T-cell (primary cell): ENCODE measurements at regions of chr6 and their contacts with region 1.

Region 1: DNA sequence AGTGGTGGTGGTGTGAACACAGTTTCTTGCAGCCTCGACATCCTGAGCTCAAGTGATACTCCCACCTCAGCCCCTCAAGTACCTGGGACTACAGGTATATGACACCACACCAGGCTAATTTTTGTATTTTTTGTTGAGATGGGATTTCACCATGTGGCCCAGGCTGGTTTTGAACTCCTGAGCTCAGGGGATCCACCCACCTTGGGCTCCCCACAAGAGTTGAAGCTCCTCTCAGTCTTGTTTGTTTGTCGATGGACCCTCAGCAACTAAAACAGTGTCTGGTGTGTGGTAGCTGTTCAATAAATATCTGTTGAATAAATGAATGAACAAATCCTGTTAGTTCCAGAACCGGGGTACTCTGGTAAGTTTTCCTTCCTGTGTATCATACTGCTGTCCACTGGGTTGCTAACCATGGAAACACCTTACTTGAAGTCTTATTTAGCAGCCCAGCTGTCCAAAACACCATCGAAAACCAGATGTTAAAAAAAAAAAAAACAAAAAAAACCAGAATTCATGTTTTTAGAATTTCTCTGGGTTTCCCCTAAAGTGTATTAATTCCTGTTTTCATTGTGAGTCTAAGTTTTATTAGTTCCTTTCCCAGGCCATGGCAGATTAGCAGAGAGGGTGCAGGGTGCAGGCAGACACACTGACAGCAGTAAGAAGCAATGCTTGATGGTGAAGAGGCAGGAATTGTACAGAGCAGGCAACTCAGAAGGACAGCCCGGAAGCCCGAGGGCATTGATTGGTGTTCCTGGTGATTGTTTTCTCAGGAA is 7.8 kb upstream of the EZR start:
- DNase-seq: no peak
- ATAC-seq: no peak
- H3K4me3 ChIP-seq: no peak overlapping the region
- H3K4me3 Mint-ChIP-seq: no peak overlapping the region
- H3K27ac ChIP-seq: no peak overlapping the region
- H3K27ac Mint-ChIP-seq: no peak overlapping the region
- H3K4me1 ChIP-seq: peaks cover 0 to 2% of the 10 kb centered on the region in 2 experiments
- H3K4me1 Mint-ChIP-seq: peaks cover 0 to 17% (median 4%) of the 10 kb centered on the region in 3 donors
- H3K27me3 ChIP-seq: no peaks in the 10 kb centered on the region
- H3K27me3 Mint-ChIP-seq: no peaks in the 10 kb centered on the region

Region 2: GRCh38 chr6:158725722-158726121 is 101.3 kb before region 1 on chr6:
- CTCF ChIA-PET with region 1: no interaction called
- POLR2A ChIA-PET with region 1: no interaction called
- DNase-seq: no peak
- ATAC-seq: no peak
- H3K4me3 ChIP-seq: no peak overlapping the region
- H3K4me3 Mint-ChIP-seq: no peak overlapping the region
- H3K27ac ChIP-seq: no peak overlapping the region
- H3K27ac Mint-ChIP-seq: no peak overlapping the region
- H3K4me1 ChIP-seq: peaks cover 0 to 14% of the 10 kb centered on the region in 2 experiments
- H3K4me1 Mint-ChIP-seq: peaks cover 6 to 15% (median 8%) of the 10 kb centered on the region in 3 donors
- H3K27me3 ChIP-seq: no peaks in the 10 kb centered on the region
- H3K27me3 Mint-ChIP-seq: no peaks in the 10 kb centered on the region

Region 3: DNA sequence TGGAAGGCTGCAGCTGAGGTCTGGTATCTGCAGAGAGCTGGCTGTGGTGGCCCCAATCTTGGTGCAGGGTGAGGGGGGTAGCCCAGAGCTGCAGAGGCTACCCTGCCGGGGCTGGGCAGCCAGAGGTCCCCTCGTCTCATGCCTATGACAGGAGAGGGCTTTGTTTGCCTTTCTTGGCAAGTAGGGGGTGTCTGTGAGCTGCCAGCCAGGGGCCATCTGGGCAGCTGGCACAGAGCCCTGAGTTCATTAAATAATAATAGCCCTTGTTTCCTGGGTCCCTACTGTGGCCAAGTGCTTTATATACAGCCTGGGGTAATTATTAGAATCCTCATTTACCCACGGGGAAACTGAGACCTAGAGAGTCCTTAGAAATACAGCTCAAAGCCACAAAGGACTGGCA is 74.4 kb before region 1 on chr6:
- CTCF ChIA-PET with region 1: no interaction called
- POLR2A ChIA-PET with region 1: interaction called in 1 of 2 experiments, 12 read pairs
- DNase-seq: no peak
- ATAC-seq: no peak
- H3K4me3 ChIP-seq: no peak overlapping the region
- H3K4me3 Mint-ChIP-seq: no peak overlapping the region
- H3K27ac ChIP-seq: no peak overlapping the region
- H3K27ac Mint-ChIP-seq: no peak overlapping the region
- H3K4me1 ChIP-seq: no peaks in the 10 kb centered on the region
- H3K4me1 Mint-ChIP-seq: no peaks in the 10 kb centered on the region
- H3K27me3 ChIP-seq: no peaks in the 10 kb centered on the region
- H3K27me3 Mint-ChIP-seq: no peaks in the 10 kb centered on the region